ENCODE measurements at regions of chr9 and their contacts with region 1.

Region 1: DNA sequence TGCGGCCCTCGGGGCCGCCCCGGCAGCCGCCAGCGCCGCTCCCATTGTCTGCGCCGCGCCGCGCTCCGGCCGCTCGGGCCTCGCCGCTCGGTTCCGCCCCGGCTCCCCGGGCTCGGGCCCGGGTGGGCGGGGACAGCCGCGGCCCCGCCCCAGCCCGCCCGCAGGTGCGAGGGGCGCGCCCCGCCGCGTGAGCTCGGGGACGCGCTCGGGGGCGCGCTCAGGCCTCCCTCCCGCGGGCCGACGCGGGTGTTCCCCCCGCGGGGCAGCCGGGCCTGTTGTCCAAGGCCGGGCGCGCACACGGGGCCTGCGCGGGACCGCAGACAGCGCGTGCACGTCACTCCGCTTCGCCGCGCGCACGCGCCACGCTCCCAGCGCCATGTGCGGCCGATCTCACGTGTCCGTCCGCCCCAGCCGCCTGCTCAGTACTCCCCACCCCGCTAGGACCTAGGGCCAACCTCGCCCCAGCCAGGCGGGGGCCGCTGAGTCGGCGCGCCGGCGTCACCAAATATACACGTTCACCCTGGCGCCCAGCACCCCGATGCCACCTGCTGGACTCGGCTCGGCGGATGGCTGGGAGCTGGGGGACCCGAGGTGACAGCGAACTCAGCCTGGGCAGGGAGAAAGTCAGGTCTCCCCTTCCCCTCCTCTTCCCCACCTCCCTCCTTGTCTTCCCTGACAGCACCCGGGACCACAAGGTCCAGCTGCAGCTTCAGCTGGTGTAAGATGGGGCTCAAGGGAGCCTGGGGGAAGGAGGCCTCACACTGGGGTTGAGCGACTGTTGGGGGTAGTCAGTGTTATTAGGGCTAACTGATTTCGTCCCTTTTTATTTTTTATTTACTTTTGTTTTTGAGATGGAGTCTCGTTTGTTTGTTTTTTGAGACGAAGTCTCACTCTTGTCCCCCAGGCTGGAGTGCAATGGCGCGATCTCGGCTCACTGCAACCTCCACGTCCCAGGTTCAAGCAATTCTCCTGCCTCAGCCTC is 14.3 kb downstream of the GBGT1 start:
- DNase-seq: peak; percentile 96
- H3K4me3 ChIP-seq: peak overlapping the region; percentile 80
- H3K27ac ChIP-seq: peak overlapping the region; percentile 66
- H3K4me1 ChIP-seq: peaks cover 5% of the 10 kb centered on the region
- H3K27me3 ChIP-seq: no peaks in the 10 kb centered on the region

Region 2: GRCh38 chr9:133048569-133048968 is 100.8 kb before region 1 on chr9:
- in situ Hi-C with region 1: loop called (anchors 10 kb)
- DNase-seq: peak; percentile 44
- H3K4me3 ChIP-seq: no peak overlapping the region
- H3K27ac ChIP-seq: no peak overlapping the region
- H3K4me1 ChIP-seq: no peaks in the 10 kb centered on the region
- H3K27me3 ChIP-seq: no peaks in the 10 kb centered on the region

Region 3: GRCh38 chr9:133106511-133107244 is 42.7 kb before region 1 on chr9:
- in situ Hi-C with region 1: loop called (anchors 5 kb)
- DNase-seq: no peak
- H3K4me3 ChIP-seq: no peak overlapping the region
- H3K27ac ChIP-seq: no peak overlapping the region
- H3K4me1 ChIP-seq: no peaks in the 10 kb centered on the region
- H3K27me3 ChIP-seq: no peaks in the 10 kb centered on the region

Measured in GM23248 (cell line).